Endothelial cell of umbilical vein (primary cell): ENCODE measurements at regions of chr4 and their contacts with region 1.

Region 1: GRCh38 chr4:77203380-77204197 is 46.6 kb downstream of the CCNG2 start:
- DNase-seq: peak; percentile 77
- H3K4me3 ChIP-seq: no peak overlapping the region
- H3K27ac ChIP-seq: no peak overlapping the region
- H3K4me1 ChIP-seq: no peaks in the 10 kb centered on the region
- H3K27me3 ChIP-seq: peaks cover 58 to 63% of the 10 kb centered on the region in 2 experiments
- CTCF ChIP-seq: peak; percentile 70 to 77
- POLR2A ChIP-seq: no peak

Region 2: DNA sequence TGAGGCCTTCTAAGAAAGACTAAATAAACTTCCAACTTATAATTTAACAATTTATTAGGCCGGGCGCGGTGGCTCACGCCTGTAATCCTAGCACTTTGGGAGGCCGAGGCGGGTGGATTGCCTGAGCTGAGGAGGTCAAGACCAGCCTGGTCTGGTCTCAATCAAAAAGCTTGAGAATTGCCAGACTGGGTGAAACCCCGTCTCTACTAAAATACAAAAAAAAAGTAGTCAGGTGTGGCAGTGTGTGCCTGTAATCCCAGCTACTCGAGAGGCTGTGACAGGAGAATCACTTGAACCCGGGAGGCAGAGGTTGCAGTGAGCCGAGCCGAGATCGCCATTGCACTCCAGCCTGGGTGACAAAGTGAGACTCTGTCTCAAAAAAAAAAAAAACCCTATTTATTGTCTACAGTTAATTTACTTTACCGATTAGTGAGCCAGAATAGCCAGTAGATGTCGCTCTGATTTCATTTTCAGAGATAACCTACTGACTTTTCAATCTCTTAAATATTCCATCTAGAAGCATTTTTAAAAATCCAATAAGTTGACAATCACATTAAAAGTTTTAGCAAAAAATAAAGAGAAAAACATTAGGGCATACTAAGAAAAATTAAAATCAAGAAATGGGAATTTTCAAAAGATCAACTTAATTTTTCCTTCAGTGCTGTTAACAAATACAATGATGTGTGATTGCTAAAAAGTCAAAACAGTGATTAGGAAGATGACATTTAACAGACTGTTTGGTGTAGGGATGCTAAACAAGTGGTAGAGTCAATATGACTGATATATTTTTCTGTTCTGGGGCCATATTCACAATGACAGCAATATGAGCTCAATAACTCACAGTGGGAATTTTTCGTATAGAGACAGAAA is 772.8 kb before region 1 on chr4:
- CTCF ChIA-PET with region 1: interaction called, 15 read pairs
- POLR2A ChIA-PET with region 1: no interaction called
- dilution Hi-C with region 1: no loop called
- intact Hi-C with region 1: no loop called
- DNase-seq: peak; percentile 61
- H3K4me3 ChIP-seq: no peak overlapping the region
- H3K27ac ChIP-seq: no peak overlapping the region
- H3K4me1 ChIP-seq: no peaks in the 10 kb centered on the region
- H3K27me3 ChIP-seq: peaks cover 14 to 26% of the 10 kb centered on the region in 2 experiments
- CTCF ChIP-seq: peak; percentile 39
- POLR2A ChIP-seq: no peak

Region 3: GRCh38 chr4:76748649-76749048 is 454.9 kb before region 1 on chr4:
- CTCF ChIA-PET with region 1: interaction called, 5 read pairs
- POLR2A ChIA-PET with region 1: no interaction called
- dilution Hi-C with region 1: no loop called
- intact Hi-C with region 1: loop called (anchors 2 kb)
- DNase-seq: peak; percentile 57
- H3K4me3 ChIP-seq: no peak overlapping the region
- H3K27ac ChIP-seq: no peak overlapping the region
- H3K4me1 ChIP-seq: peaks cover 24% of the 10 kb centered on the region
- H3K27me3 ChIP-seq: no peaks in the 10 kb centered on the region
- CTCF ChIP-seq: peak; percentile 28 to 35
- POLR2A ChIP-seq: no peak

Region 4: GRCh38 chr4:76892621-76893020 is 311.0 kb before region 1 on chr4:
- CTCF ChIA-PET with region 1: no interaction called
- POLR2A ChIA-PET with region 1: no interaction called
- dilution Hi-C with region 1: no loop called
- intact Hi-C with region 1: no loop called
- DNase-seq: no peak
- H3K4me3 ChIP-seq: no peak overlapping the region
- H3K27ac ChIP-seq: no peak overlapping the region
- H3K4me1 ChIP-seq: peaks cover 2% of the 10 kb centered on the region
- H3K27me3 ChIP-seq: peaks cover 17 to 52% of the 10 kb centered on the region in 2 experiments
- CTCF ChIP-seq: no peak
- POLR2A ChIP-seq: no peak

Region 5: DNA sequence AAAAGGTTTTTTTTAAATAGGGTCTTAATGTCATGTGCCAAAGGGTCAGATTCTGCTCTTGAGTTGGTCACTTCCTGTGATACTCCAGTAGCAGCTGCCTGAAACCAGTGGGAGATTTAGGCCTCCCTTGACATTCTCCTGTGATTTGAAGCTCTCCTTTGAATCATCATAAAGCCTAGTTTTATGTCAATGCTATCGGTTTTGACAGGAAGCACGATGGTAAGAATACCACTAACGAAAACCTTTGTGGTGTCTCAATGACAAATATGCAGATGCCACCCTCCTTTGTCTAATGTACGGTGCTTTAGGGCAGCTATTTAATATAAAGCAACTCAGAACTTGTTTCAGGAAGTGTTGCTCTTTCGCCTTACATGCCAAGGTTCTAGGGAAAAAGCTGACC is 172.0 kb before region 1 on chr4:
- CTCF ChIA-PET with region 1: interaction called, 10 read pairs
- POLR2A ChIA-PET with region 1: no interaction called
- dilution Hi-C with region 1: no loop called
- intact Hi-C with region 1: no loop called
- DNase-seq: no peak
- H3K4me3 ChIP-seq: no peak overlapping the region
- H3K27ac ChIP-seq: no peak overlapping the region
- H3K4me1 ChIP-seq: no peaks in the 10 kb centered on the region
- H3K27me3 ChIP-seq: no peaks in the 10 kb centered on the region
- CTCF ChIP-seq: no peak
- POLR2A ChIP-seq: no peak

Region 6: DNA sequence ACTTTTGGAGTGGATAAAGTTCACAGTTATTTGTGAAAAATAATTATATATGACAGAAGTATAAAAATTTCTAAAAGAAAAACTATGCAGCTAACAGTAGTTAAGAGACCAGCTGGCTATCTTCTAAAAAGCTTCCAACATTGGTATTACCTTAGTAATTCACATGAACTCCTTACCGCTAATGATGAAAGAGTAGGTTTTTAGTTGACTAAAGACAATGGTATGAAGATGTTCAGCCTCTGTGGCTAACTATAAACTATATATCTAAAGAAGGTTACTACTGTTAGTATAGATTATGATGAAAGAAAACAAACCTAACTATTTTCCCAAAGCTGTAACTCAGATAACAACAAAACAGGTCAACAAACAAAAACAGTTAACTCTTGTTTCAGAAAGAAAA is 138.2 kb before region 1 on chr4:
- CTCF ChIA-PET with region 1: interaction called, 57 read pairs
- POLR2A ChIA-PET with region 1: no interaction called
- dilution Hi-C with region 1: no loop called
- intact Hi-C with region 1: no loop called
- DNase-seq: no peak
- H3K4me3 ChIP-seq: no peak overlapping the region
- H3K27ac ChIP-seq: no peak overlapping the region
- H3K4me1 ChIP-seq: no peaks in the 10 kb centered on the region
- H3K27me3 ChIP-seq: no peaks in the 10 kb centered on the region
- CTCF ChIP-seq: no peak
- POLR2A ChIP-seq: no peak

Region 7: DNA sequence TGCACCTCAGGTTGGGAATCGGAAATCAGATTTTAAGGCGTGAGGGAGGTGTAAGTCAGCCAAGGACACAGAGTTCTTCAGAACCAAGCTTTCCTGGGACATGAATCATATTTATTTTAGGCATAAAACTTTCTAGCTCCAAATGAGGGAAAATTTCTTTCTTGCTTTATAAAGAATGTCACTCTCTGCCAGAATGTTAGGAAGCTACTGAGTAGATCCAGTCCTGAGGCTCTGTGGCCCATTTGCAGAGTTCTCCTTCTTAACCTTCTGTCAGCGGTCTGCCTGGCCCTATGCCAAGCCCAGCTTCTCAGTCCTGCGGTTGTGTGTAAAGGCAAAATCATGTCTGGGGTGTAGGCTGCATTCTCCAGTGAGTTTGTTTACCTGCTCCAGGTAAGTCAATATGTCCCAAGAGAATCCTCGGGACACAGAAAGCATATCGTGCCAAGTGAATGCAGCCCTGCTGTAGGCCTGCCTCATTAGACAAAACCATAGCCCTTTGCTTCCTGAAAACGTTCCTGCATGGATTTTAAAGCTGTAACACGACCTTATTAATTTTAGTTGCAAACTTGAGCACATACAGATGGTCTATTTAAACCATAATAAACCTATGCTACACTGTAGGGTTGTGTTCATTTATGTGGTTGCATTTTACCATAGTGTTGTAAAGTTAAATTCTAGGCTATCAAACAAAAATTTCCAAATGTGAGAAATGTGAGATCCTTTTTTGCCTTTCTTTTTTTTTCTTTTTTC is 98.6 kb before region 1 on chr4:
- CTCF ChIA-PET with region 1: interaction called, 24 read pairs
- POLR2A ChIA-PET with region 1: no interaction called
- dilution Hi-C with region 1: no loop called
- intact Hi-C with region 1: no loop called
- DNase-seq: no peak
- H3K4me3 ChIP-seq: no peak overlapping the region
- H3K27ac ChIP-seq: no peak overlapping the region
- H3K4me1 ChIP-seq: peaks cover 9% of the 10 kb centered on the region
- H3K27me3 ChIP-seq: peaks cover 28 to 41% of the 10 kb centered on the region in 2 experiments
- CTCF ChIP-seq: no peak
- POLR2A ChIP-seq: no peak

Region 8: DNA sequence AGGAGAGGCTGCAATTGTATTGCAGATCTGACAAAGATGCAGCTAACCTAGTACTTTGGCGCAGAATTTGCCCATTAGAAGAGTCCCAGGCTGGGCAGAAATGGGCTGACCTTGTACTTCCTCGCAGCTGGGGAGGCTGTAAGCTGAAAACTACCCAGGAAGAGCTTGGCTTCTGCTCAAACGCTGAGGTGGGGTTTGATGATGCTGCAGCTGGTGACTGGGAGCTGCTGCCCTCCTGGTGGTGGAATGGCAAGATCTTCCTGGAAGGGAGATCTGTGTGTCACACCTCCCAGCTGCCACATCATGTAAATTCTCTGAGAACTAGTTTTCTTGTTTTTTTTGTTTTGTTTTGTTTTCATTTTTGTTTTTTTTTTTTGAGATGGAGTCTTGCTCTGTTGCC is 29.2 kb before region 1 on chr4:
- CTCF ChIA-PET with region 1: interaction called, 12 read pairs
- POLR2A ChIA-PET with region 1: no interaction called
- dilution Hi-C with region 1: no loop called
- intact Hi-C with region 1: no loop called
- DNase-seq: no peak
- H3K4me3 ChIP-seq: no peak overlapping the region
- H3K27ac ChIP-seq: no peak overlapping the region
- H3K4me1 ChIP-seq: no peaks in the 10 kb centered on the region
- H3K27me3 ChIP-seq: peaks cover 24% of the 10 kb centered on the region in 2 experiments
- CTCF ChIP-seq: no peak
- POLR2A ChIP-seq: no peak